Cardiac septum (tissue), 1 donor: ENCODE measurements at regions of chr12 and their contacts with region 1.

Region 1: GRCh38 chr12:93127582-93128331 is 198.7 kb upstream of the EEA1 start:
- DNase-seq: peak; percentile 86

Region 2: DNA sequence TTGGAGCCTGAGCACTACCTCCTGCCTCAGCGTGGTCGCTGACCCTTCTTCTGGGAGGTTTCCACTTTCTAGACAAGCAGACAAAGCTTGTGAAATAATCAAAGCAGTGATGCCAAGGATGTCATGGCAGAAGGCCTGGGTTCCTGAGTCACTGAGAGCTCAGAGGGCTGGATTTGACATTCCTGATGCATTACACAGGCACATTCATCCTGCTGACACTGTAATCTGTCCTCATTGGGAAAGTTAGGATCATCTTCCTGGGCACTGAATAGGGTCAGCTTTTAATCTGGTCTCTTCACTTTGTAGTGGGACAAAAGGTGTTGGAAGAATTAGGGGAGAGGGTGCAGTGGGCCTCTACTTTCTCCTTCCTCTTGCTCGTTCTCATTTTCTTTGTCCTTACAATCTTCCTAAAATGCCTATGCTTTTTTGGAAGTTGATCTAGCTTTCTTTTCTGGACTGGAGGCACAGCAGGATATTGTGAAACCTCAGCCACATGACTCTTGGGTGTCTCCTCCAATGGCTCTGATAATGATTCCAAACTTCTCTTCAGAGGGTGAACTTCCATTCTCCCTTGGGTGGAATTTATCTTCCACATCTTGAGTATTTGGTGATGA is 228.3 kb before region 1 on chr12:
- intact Hi-C with region 1: no loop called
- DNase-seq: peak; percentile 79

Region 3: GRCh38 chr12:93025145-93025805 is 102.5 kb before region 1 on chr12:
- intact Hi-C with region 1: loop called (anchors 2 kb)
- DNase-seq: no peak

Region 4: DNA sequence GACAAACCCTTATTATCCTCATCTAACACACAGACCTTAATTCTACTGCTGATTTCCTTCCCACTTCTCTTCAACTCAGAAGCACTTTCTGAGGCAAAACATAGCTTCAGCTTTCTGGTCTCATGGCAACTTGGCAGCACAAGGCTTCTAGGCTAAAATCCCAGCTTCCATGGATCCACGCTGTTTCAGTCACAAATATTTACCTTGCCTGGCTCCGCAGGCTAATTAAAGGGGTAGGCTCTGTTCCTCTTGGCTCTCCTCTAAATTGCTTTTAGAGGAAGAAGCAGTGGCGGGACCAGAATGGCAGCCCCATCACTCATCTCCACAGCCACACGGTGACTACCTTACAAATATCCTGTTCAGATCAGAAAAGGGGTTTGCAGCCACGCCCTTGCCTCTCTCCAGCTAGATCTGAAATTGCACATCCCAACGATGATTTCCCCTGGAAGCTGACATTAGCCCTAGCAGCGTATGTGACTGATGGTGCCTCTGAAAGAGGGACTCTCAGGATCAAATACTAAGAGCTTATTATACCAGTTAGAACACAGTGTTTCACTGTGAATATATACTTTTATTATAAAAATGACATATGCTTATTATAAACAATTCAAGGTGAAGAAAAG is 28.4 kb after region 1 on chr12:
- intact Hi-C with region 1: no loop called
- DNase-seq: no peak

Region 5: DNA sequence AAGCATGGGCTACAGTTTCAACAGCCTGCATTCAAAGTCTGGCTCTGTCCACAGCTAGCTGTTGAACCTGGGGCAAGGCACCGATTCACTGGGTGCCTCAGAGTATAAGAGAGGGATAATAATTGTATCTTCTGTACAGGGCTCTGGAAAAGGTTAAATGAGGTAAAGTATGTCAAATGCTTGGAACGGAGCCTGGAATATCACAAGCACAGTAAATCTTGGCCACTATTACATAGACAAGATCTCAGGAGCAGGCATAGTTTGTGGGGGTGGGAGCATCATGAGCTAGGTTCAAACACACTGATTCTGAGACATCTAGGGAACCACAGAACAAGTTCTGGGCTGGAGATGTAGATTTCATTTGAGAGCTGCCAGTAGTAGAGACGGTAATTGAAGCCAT is 46.3 kb after region 1 on chr12:
- intact Hi-C with region 1: loop called (anchors 2 kb)
- DNase-seq: no peak

Region 6: GRCh38 chr12:93214523-93215289 is 86.9 kb after region 1 on chr12:
- intact Hi-C with region 1: no loop called
- DNase-seq: no peak